ENCODE measurements at regions of chr20 and their contacts with region 1.

Region 1: DNA sequence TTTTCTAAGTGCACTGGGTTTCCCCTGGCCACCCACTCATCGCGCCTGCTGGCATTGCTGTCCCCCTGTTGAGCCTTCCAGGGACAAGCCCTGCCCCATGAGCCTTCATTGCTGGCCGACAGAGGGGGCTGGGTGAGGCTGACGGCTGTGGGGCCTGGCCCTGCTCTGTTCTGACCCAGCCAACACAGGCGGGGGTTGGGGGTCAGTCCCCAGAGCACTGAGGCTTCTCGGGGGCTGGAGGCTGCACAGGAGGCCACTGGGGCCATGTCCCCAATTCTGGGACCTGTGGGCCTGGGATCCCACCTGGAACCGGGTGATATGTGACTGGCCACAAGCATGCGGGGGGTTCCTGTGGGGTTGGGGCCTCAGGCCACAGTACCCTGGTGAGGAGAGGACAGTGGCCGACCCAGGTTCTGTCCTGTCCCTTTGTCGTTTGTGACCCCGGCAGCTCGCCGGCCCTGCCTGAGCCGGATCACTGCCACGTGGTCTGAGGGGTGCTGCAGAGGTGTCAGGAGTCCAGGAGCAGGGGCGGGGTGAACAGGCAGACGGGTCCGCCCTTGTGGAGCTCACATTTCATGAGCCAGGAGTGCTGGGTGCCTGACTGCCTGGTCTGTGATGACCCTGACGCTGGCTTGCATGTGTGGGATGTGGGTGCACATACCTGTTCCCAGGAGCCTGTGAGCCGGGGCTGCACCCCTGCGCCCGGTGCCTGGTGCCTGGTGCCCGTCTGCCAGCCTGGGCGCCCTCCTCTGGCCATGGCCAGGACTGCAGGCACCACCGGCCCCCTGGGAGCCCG is 2.1 kb upstream of the COL20A1 start:
- DNase-seq: peak; percentile 51 to 75
- ATAC-seq: peak; percentile 35 to 75
- H3K4me3 ChIP-seq: no peak overlapping the region
- H3K27ac ChIP-seq: peak overlapping the region in 1 of 2 experiments; percentile 29; a peak in 2 of 6 replicates
- H3K4me1 ChIP-seq: peaks cover 23% of the 10 kb centered on the region; the same call in 2 of the 3 replicates
- CTCF ChIP-seq: peak; percentile 52
- EP300 ChIP-seq: no peak
- POLR2A ChIP-seq: no peak
- RAD21 ChIP-seq: peak; percentile 42 to 45; a peak in 3 of 5 replicates

Region 2: DNA sequence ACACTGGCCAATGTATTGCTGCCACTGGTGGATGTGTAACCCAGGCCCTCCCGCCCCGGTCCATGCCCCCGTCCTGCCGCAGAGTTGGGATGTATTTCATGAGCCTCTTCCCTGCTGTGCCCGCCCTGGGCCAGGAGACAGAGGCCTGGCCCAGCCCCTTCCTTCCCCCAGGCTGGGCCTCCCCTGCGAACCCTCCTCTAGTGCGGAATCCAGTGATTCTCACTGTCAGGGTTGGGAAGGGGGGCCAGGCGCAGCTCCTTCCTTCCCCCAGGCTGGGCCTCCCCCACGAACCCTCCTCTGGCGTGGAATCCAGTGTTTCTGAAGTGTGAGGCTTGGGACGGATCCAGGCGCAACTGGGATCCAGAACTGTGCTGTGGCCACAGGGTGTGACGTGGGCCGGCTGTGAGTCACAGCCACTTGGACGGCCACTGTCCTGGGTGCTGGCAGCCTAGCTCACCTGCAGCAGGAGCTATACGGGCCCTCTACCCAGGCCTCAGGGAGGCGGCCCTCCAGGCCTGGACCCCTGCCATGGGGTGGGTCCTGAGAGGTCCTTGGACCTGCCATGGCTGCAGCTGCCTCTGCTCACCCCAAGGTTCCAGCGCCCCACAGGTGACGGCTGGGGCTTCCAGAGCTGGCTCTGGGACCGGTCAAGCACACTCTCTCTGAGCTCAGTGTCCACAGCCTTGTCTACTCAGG is 30.4 kb after region 1 on chr20:
- CTCF ChIA-PET with region 1: interaction called, 12 read pairs
- POLR2A ChIA-PET with region 1: no interaction called
- DNase-seq: no peak
- ATAC-seq: peak; percentile 15 to 24; a peak in 3 of 6 replicates
- H3K4me3 ChIP-seq: no peak overlapping the region
- H3K27ac ChIP-seq: no peak overlapping the region
- H3K4me1 ChIP-seq: peaks cover 6% of the 10 kb centered on the region; the same call in 2 of the 3 replicates
- CTCF ChIP-seq: no peak
- EP300 ChIP-seq: no peak
- POLR2A ChIP-seq: no peak
- RAD21 ChIP-seq: no peak